IMR-90 (cell line): ENCODE measurements at regions of chr3 and their contacts with region 1.

Region 1: DNA sequence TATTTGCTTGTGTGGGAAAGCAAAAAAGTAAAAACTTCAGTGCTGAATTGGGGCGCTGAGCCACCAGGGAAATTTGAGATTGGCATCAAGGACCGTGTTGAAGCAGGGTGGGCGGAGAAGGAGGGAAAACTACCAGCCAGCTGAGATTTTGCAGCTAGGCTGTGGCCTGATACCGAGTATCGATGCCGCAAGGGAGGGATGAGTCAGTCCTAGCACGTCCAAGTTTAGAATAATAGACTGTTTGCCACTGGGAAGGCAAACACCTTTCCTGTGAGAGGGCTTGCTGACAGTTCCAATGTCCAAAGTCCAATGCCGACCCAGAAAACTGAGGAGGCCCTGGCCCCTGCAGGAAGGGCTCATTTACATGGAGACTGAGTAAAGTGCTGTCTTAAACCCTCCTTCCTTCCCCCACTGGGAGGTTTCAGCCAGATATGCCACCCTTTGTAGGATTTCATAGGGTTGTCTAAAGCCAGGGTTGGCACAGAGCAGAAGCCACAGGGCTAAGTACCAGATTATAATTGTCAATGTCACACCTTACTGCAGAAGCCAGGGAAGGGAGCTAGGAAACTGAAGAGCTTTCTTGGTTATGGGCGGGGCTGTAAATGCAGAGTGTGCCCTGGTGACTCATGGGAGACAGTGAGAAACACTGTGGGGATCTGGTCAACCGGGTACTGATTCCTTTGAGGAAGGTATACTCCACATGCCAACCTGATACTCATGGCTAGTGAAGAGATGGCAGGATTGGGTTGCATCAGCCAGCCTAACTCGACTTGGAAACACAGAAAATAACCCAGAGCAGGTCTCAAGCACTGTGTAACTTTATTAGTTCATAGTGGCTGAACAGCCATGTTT is 28.4 kb upstream of the PIK3CB start:
- DNase-seq: peak; percentile 76
- ATAC-seq: peak; percentile 89
- H3K4me3 ChIP-seq: no peak overlapping the region
- H3K27ac ChIP-seq: no peak overlapping the region
- H3K4me1 ChIP-seq: peaks cover 15% of the 10 kb centered on the region
- H3K27me3 ChIP-seq: no peaks in the 10 kb centered on the region
- CTCF ChIP-seq: no peak
- POLR2A ChIP-seq: no peak
- RAD21 ChIP-seq: no peak

Region 2: GRCh38 chr3:138132239-138132638 is 730.9 kb before region 1 on chr3 and contains the start of gene A4GNT:
- CTCF ChIA-PET with region 1: no interaction called
- POLR2A ChIA-PET with region 1: no interaction called
- dilution Hi-C with region 1: no loop called
- in situ Hi-C with region 1: no loop called
- intact Hi-C with region 1: loop called (anchors 5 kb)
- DNase-seq: no peak
- ATAC-seq: no peak
- H3K4me3 ChIP-seq: no peak within 1 kb of the TSS
- H3K27ac ChIP-seq: no peak within 1 kb of the TSS
- H3K4me1 ChIP-seq: no peaks in the 10 kb centered on the region
- H3K27me3 ChIP-seq: peaks cover 17% of the 10 kb centered on the region
- CTCF ChIP-seq: no peak
- POLR2A ChIP-seq: no peak
- RAD21 ChIP-seq: no peak
- total RNA-seq, gene A4GNT: not detected in 2 replicates

Region 3: DNA sequence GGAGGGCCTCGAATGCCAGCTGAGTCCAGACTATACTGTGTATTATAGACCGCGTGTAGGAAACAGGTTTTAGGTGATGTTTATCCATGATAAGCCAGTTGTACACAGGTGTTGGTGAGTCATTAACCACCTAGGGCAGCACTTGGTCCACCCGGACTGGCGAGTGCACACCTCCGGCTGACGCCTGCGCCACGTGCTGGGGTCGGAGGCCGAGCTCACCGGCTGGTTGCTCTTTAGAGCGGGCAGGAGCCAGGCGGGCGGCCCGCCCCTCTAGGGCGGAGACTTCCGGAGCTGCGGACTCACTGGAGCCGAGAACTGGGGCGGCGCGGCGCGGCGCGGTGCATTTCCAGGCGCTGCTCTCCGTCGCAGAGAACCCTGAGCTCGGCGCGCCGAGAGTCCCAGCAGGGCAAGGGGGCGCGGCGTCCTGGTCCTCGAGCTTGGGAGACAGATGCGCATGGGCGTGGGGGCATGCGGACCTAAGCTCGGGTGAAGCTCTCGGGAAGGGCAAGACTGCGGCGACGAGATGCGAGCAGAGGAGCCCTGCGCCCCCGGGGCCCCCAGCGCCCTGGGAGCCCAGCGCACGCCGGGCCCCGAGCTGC is 428.8 kb before region 1 on chr3 and contains the start of gene ESYT3:
- CTCF ChIA-PET with region 1: no interaction called
- POLR2A ChIA-PET with region 1: no interaction called
- dilution Hi-C with region 1: no loop called
- in situ Hi-C with region 1: no loop called
- intact Hi-C with region 1: no loop called
- DNase-seq: peak; percentile 43
- ATAC-seq: peak; percentile 96
- H3K4me3 ChIP-seq: peak within 1 kb of the TSS; percentile 34
- H3K27ac ChIP-seq: no peak within 1 kb of the TSS
- H3K4me1 ChIP-seq: peaks cover 2% of the 10 kb centered on the region; the same call in 1 of the 2 replicates
- H3K27me3 ChIP-seq: peaks cover 66% of the 10 kb centered on the region
- CTCF ChIP-seq: no peak
- POLR2A ChIP-seq: no peak
- RAD21 ChIP-seq: no peak
- total RNA-seq, gene ESYT3: under 0.01 TPM in 2 replicates

Region 4: GRCh38 chr3:138850151-138850550 is 13.0 kb before region 1 on chr3:
- CTCF ChIA-PET with region 1: interaction called, 5 read pairs
- POLR2A ChIA-PET with region 1: interaction called, 10 read pairs
- dilution Hi-C with region 1: no loop called
- in situ Hi-C with region 1: no loop called
- intact Hi-C with region 1: no loop called
- DNase-seq: peak; percentile 52
- ATAC-seq: peak; percentile 56
- H3K4me3 ChIP-seq: no peak overlapping the region
- H3K27ac ChIP-seq: no peak overlapping the region
- H3K4me1 ChIP-seq: peaks cover 2% of the 10 kb centered on the region; the same call in 1 of the 2 replicates
- H3K27me3 ChIP-seq: no peaks in the 10 kb centered on the region
- CTCF ChIP-seq: no peak
- POLR2A ChIP-seq: no peak
- RAD21 ChIP-seq: no peak

Region 5: DNA sequence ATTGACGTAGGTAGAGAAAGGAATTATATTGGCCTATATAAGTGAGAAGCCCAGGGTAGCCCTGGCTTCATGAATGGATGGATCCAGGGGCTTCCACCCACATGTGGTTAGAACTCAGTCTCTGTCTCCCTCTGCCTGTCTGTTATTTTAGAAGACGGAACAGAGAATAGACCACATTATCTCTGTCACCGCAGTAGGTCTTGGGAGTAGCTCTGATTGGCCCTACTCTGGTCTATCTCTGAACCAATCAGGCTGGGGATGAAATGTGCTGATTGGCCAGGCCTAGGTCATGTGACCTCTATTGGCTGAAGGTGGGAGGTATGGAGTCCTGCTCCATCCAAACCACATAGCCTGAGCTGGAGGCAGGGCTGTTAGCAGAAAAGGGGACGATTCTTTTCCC is 324.5 kb after region 1 on chr3:
- CTCF ChIA-PET with region 1: no interaction called
- POLR2A ChIA-PET with region 1: no interaction called
- dilution Hi-C with region 1: no loop called
- in situ Hi-C with region 1: no loop called
- intact Hi-C with region 1: no loop called
- DNase-seq: no peak
- ATAC-seq: no peak
- H3K4me3 ChIP-seq: no peak overlapping the region
- H3K27ac ChIP-seq: no peak overlapping the region
- H3K4me1 ChIP-seq: no peaks in the 10 kb centered on the region
- H3K27me3 ChIP-seq: no peaks in the 10 kb centered on the region; the same call in 1 of the 2 replicates
- CTCF ChIP-seq: 0 out of 2 replicates have a peak, but pooled peaks have one; percentile 3
- POLR2A ChIP-seq: no peak
- RAD21 ChIP-seq: no peak